Activated CD8-positive, alpha-beta memory T cell treated with anti-CD3 and anti-CD28 coated beads, Interleukin-2, amount 10 ng/mL, durations not matched to agents 7 days and 5 days (primary cell): ENCODE measurements at regions of chr4 and their contacts with region 1.

Region 1: GRCh38 chr4:153750197-153750817 is 9.5 kb downstream of the RNF175 start:
- DNase-seq: peak; percentile 72
- ATAC-seq: peak; percentile 65
- H3K4me3 Mint-ChIP-seq: no peak overlapping the region
- H3K27ac Mint-ChIP-seq: no peak overlapping the region
- H3K4me1 Mint-ChIP-seq: no peaks in the 10 kb centered on the region
- H3K27me3 Mint-ChIP-seq: peaks cover 53% of the 10 kb centered on the region

Region 2: DNA sequence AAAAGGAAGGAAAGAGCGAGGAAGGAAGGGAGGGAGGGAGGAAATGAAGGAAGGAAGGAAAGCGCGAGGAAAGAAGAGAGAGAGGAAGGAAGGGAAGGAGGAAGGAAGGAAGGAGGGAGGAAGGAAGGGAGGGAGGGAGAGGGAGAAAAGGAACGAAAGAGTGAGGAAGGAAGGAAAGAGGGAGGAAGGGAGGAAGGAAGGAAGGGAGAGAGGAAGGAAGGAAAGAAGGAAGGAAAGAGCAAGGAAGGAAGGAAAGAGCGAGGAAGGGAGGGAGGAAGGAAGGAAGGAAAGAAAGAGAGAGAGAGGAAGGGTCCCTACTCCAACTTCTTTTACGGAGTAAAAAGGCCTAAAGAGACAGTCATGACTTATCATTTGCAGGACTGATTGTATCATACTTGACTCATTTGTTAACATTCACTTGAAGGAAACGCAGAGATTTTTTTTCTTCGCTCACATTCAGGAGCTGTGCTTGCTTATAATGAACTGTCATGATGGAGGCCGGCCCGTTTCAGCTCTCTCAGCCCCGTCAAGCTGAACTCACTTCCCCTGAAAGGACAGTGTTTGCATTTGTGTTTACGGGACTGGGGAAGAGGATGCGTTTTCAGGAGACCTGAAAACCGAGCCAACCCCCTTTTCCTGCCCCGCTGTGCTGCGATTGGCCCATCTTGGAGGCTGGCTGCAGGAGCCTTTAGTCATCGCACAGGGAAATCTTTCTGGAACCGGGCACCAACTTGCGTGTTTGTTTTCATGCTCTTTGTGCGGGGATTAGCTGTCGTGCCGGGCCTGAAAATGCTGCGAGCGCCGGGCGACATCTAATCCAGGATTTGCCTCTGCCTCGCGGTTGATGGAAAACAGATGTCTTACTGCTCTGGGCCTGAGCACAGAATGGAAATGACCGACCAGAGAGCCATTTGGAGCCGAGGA is 528.3 kb before region 1 on chr4:
- CTCF ChIA-PET with region 1: no interaction called
- DNase-seq: no peak
- ATAC-seq: peak; percentile 42
- H3K4me3 Mint-ChIP-seq: peak overlapping the region; percentile 63
- H3K27ac Mint-ChIP-seq: peak overlapping the region; percentile 8
- H3K4me1 Mint-ChIP-seq: peaks cover 17% of the 10 kb centered on the region
- H3K27me3 Mint-ChIP-seq: peaks cover 73% of the 10 kb centered on the region

Region 3: DNA sequence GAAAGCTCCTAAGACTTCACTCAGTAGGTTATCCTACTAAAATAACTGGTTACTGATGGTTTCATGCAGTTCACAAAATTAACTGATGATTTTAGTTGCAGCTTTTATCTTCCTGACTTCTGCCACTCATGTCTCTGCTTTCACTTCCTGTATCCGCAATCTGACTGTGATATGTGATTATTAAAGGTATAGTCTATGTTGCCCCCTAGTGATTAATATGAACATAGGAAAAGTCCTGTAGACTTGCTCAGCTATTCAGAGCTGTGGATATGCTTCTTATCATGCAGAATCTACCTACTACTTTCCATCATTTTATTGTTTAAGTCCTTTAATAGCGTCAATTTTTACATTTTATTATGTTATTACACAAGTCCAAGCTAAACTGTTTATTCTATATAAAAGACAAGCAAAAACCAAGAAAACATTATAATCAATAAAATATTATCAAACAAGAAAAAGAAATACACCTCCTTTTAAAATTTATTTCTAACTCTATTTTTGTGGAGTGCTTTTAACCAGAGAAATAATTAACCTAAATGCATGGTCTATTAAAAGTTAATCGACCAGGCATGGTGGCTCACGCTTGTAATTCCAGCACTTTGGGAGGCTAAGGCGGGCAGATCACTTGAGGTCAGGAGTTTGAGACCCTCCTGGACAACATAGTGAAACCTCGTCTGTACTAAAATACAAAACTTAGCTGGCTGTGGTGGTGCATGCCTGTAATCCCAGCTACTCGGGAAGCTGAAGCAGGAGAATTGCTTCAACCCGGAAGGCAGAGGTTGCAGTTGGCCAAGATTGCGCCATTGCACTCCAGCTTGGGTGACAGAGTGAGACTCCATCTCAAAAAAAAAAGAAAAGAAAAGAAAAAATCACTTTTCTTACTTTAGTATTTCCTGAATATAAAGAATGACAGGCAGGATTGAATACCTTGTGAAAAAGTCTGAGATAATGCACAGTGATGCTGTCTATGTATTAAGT is 106.6 kb before region 1 on chr4:
- CTCF ChIA-PET with region 1: interaction called, 22 read pairs
- DNase-seq: no peak
- ATAC-seq: peak; percentile 93
- H3K4me3 Mint-ChIP-seq: no peak overlapping the region
- H3K27ac Mint-ChIP-seq: peak overlapping the region; percentile 59
- H3K4me1 Mint-ChIP-seq: peaks cover 14% of the 10 kb centered on the region
- H3K27me3 Mint-ChIP-seq: no peaks in the 10 kb centered on the region

Region 4: DNA sequence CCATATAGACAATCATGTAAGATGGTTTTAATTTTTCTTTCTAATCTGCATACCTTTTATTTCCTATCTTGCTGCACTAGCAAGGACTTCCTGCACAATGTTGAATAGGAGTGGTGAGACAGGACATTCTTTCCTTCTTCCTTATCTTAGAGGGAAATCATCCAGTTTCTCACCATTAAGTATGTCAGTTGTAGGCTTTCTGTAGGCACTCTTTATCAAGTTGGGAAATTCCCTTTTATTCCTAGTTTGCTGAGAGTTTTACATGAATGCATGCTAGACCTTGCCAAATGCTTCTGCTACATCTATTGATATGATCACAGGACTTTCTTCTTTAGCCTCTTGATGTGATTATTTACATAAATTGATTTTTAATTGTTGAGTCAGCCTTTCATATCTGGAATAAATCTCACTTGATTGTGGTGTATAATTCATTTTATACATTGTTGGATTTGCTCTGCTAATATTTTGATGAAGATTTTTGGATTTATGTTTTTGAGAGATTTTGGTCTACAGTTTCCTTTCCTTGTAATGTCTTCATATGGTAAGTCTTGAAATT is 14.3 kb before region 1 on chr4:
- CTCF ChIA-PET with region 1: interaction called, 10 read pairs
- DNase-seq: no peak
- ATAC-seq: no peak
- H3K4me3 Mint-ChIP-seq: no peak overlapping the region
- H3K27ac Mint-ChIP-seq: no peak overlapping the region
- H3K4me1 Mint-ChIP-seq: peaks cover 6% of the 10 kb centered on the region
- H3K27me3 Mint-ChIP-seq: peaks cover 61% of the 10 kb centered on the region